ENCODE measurements at regions of chr3 and their contacts with region 1.

Region 1: GRCh38 chr3:37367436-37367835 is 193.1 kb upstream of the LRRFIP2 start:
- DNase-seq: no peak
- H3K4me3 ChIP-seq: no peak overlapping the region
- H3K27ac ChIP-seq: no peak overlapping the region
- H3K27me3 ChIP-seq: no peaks in the 10 kb centered on the region
- CTCF ChIP-seq: no peak

Region 2: GRCh38 chr3:37348736-37349396 is 18.6 kb before region 1 on chr3:
- CTCF ChIA-PET with region 1: interaction called, 12 read pairs
- POLR2A ChIA-PET with region 1: no interaction called
- DNase-seq: no peak
- H3K4me3 ChIP-seq: no peak overlapping the region
- H3K27ac ChIP-seq: no peak overlapping the region
- H3K27me3 ChIP-seq: no peaks in the 10 kb centered on the region
- CTCF ChIP-seq: no peak

Region 3: GRCh38 chr3:37935290-37935668 is 567.8 kb after region 1 on chr3:
- CTCF ChIA-PET with region 1: no interaction called
- POLR2A ChIA-PET with region 1: no interaction called
- DNase-seq: no peak
- H3K4me3 ChIP-seq: no peak overlapping the region
- H3K27ac ChIP-seq: peak overlapping the region; percentile 85
- H3K27me3 ChIP-seq: no peaks in the 10 kb centered on the region
- CTCF ChIP-seq: no peak

Measured in AG04450 (cell line).